Gastrocnemius medialis (tissue), 4 donors: ENCODE measurements at regions of chr18 and their contacts with region 1.

Region 1: GRCh38 chr18:62505669-62506494 is 16.9 kb upstream of the ZCCHC2 start:
- DNase-seq: no peak
- ATAC-seq: peak in 1 of 2 donors; percentile 42
- H3K4me3 ChIP-seq: peak overlapping the region; percentile 24 to 55 (median 46)
- H3K27ac ChIP-seq: peak overlapping the region; percentile 48 to 74 (median 66)
- H3K4me1 ChIP-seq: no peaks in the 10 kb centered on the region
- H3K27me3 ChIP-seq: no peaks in the 10 kb centered on the region
- CTCF ChIP-seq: no peak
- POLR2A ChIP-seq: no peak

Region 2: GRCh38 chr18:61710082-61710620 is 795.7 kb before region 1 on chr18:
- in situ Hi-C with region 1: no loop called
- intact Hi-C with region 1: no loop called
- DNase-seq: no peak
- ATAC-seq: no peak
- H3K4me3 ChIP-seq: no peak overlapping the region
- H3K27ac ChIP-seq: no peak overlapping the region
- H3K4me1 ChIP-seq: no peaks in the 10 kb centered on the region
- H3K27me3 ChIP-seq: no peaks in the 10 kb centered on the region
- CTCF ChIP-seq: no peak
- POLR2A ChIP-seq: no peak

Region 3: DNA sequence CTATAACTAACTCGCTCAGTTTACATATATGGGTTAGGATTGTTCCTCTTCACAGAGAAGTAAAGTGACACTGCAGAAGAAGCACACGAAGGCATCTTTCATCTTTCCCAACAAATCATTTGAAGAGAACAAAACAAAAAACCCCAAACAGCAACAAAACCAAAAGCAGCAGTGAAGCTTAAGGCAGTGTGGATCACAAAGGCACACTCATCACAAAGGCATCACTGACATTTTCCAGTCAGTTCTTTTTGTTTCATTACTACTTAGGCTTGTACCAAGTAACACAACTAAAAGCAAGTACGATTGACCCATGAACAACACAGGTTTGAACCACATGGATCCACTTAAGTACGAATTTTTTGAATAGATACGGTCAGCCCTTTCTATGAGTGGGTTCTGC is 688.8 kb before region 1 on chr18:
- in situ Hi-C with region 1: no loop called
- intact Hi-C with region 1: no loop called
- DNase-seq: no peak
- ATAC-seq: no peak
- H3K4me3 ChIP-seq: no peak overlapping the region
- H3K27ac ChIP-seq: no peak overlapping the region
- H3K4me1 ChIP-seq: no peaks in the 10 kb centered on the region
- H3K27me3 ChIP-seq: no peaks in the 10 kb centered on the region
- CTCF ChIP-seq: no peak
- POLR2A ChIP-seq: no peak

Region 4: DNA sequence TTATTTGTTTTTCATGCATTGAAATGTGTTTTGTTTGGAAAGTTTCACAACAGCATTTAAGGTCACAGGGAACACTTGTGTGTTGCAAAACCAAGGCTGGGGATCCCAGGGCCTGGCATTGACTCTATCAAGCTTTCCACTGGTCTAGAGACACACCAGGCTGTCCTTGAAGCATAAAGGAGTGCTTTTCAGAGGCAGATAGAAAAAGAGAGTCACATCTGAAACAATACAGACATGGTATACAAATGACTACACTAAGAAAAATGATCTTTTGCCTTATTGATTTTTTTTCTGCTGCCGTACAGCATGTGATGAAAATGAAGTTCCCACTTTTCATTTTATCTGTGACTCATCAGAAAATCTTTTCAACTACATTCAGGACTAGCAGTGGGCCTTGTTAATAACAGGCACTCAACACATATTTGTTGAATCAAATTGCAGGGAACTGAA is 45.0 kb before region 1 on chr18:
- in situ Hi-C with region 1: no loop called
- intact Hi-C with region 1: loop called (anchors 5 kb)
- DNase-seq: peak in 1 of 2 donors; percentile 48
- ATAC-seq: peak in 1 of 2 donors; percentile 66
- H3K4me3 ChIP-seq: no peak overlapping the region
- H3K27ac ChIP-seq: peak overlapping the region in 1 of 4 donors; percentile 10
- H3K4me1 ChIP-seq: peaks cover 10 to 15% of the 10 kb centered on the region in 2 donors
- H3K27me3 ChIP-seq: no peaks in the 10 kb centered on the region
- CTCF ChIP-seq: no peak
- POLR2A ChIP-seq: no peak

Region 5: GRCh38 chr18:62606106-62606505 is 100.2 kb after region 1 on chr18:
- in situ Hi-C with region 1: no loop called
- intact Hi-C with region 1: no loop called
- DNase-seq: no peak
- ATAC-seq: no peak
- H3K4me3 ChIP-seq: no peak overlapping the region
- H3K27ac ChIP-seq: no peak overlapping the region
- H3K4me1 ChIP-seq: peaks cover 0 to 3% of the 10 kb centered on the region in 2 donors
- H3K27me3 ChIP-seq: peaks cover 6 to 11% (median 8%) of the 10 kb centered on the region in 3 donors
- CTCF ChIP-seq: no peak
- POLR2A ChIP-seq: no peak